ENCODE measurements at regions of chr6 and their contacts with region 1.

Region 1: DNA sequence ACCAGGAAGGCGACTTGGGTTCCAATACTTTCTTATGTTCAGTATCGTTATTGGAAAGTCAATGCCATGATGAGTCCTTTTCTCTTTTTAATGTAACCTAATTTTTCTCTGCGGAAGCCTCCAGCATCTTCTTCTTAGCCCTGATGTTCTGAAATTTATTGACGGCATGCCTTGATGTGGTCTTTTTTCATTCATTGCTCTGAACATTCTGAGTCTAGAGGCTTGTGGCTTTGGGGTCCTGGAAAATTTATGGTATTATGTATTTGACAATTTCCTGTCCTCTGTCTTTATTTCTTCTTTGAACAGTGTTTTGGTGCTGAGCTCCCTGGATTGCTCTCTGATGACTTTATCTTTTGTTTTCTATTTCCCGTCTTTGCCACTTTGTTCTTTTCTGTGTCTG is 28.7 kb upstream of the MAS1 start:
- DNase-seq: no peak
- H3K4me3 ChIP-seq: no peak overlapping the region
- H3K27ac ChIP-seq: no peak overlapping the region
- H3K4me1 ChIP-seq: no peaks in the 10 kb centered on the region
- H3K27me3 ChIP-seq: no peaks in the 10 kb centered on the region; the same call in 1 of the 2 replicates
- CTCF ChIP-seq: no peak
- EP300 ChIP-seq: no peak
- RAD21 ChIP-seq: no peak

Region 2: GRCh38 chr6:159761129-159761872 is 100.8 kb before region 1 on chr6:
- CTCF ChIA-PET with region 1: no interaction called
- POLR2A ChIA-PET with region 1: no interaction called
- DNase-seq: peak; percentile 36
- H3K4me3 ChIP-seq: peak overlapping the region; percentile 75 to 85
- H3K27ac ChIP-seq: peak overlapping the region; percentile 91 to 94
- H3K4me1 ChIP-seq: peaks cover 13 to 20% of the 10 kb centered on the region in 2 experiments
- H3K27me3 ChIP-seq: no peaks in the 10 kb centered on the region
- CTCF ChIP-seq: no peak
- EP300 ChIP-seq: no peak
- RAD21 ChIP-seq: no peak

Region 3: GRCh38 chr6:159898519-159898918 is 36.4 kb after region 1 on chr6:
- CTCF ChIA-PET with region 1: no interaction called
- POLR2A ChIA-PET with region 1: no interaction called
- DNase-seq: no peak
- H3K4me3 ChIP-seq: no peak overlapping the region
- H3K27ac ChIP-seq: no peak overlapping the region
- H3K4me1 ChIP-seq: no peaks in the 10 kb centered on the region
- H3K27me3 ChIP-seq: no peaks in the 10 kb centered on the region
- CTCF ChIP-seq: no peak
- EP300 ChIP-seq: no peak
- RAD21 ChIP-seq: no peak

Region 4: DNA sequence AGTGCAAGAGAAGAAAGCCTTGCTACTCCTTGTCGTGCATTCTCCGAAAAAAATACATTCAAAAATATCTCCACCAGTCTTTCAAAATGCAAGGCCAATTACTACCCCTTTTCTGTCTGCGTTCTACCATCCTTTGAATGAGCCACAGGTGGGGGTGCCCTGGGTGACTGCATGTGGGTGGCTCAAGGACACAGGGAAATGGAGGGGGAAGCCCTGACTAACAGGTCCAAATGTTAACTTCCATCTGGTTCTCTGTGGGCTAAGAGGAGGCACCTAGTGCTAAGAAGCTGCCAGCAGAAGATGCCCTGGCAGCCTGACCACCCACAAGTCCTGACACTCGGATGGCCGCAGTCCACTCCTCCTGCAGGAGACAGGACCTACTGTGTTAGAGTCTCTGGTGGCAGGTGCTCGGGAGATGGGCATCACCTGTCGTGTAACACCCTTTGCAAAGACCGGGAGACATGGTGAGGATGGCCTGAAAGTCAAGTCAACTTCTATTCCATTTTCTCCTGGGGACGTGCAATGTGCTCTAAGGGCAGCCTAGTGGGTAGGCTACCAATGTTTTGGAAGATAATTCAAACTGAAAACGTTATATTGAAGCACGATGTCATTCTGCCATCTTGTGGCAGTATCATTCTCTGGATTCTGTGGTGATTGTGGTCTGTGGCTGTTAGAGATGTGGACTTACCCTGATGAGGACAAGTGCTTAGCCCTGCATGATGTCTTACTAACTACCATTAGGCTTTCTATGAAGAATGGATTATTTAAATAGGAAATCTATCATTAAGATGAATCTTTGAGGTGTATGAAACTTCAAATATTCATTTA is 79.4 kb after region 1 on chr6:
- CTCF ChIA-PET with region 1: interaction called, 21 read pairs
- POLR2A ChIA-PET with region 1: no interaction called
- DNase-seq: peak; percentile 14
- H3K4me3 ChIP-seq: no peak overlapping the region
- H3K27ac ChIP-seq: no peak overlapping the region
- H3K4me1 ChIP-seq: no peaks in the 10 kb centered on the region
- H3K27me3 ChIP-seq: no peaks in the 10 kb centered on the region; the same call in 1 of the 2 replicates
- CTCF ChIP-seq: peak; percentile 53
- EP300 ChIP-seq: no peak
- RAD21 ChIP-seq: peak; percentile 75

Region 5: GRCh38 chr6:159963111-159963510 is 101.0 kb after region 1 on chr6:
- CTCF ChIA-PET with region 1: no interaction called
- POLR2A ChIA-PET with region 1: no interaction called
- DNase-seq: no peak
- H3K4me3 ChIP-seq: no peak overlapping the region
- H3K27ac ChIP-seq: no peak overlapping the region
- H3K4me1 ChIP-seq: no peaks in the 10 kb centered on the region
- H3K27me3 ChIP-seq: no peaks in the 10 kb centered on the region; the same call in 1 of the 2 replicates
- CTCF ChIP-seq: no peak
- EP300 ChIP-seq: no peak
- RAD21 ChIP-seq: no peak

Region 6: GRCh38 chr6:160005211-160005610 is 143.1 kb after region 1 on chr6:
- CTCF ChIA-PET with region 1: no interaction called
- POLR2A ChIA-PET with region 1: no interaction called
- DNase-seq: peak; percentile 45
- H3K4me3 ChIP-seq: no peak overlapping the region
- H3K27ac ChIP-seq: no peak overlapping the region
- H3K4me1 ChIP-seq: peaks cover 0 to 2% of the 10 kb centered on the region in 2 experiments; a peak in 1 of 4 replicates
- H3K27me3 ChIP-seq: no peaks in the 10 kb centered on the region; the same call in 1 of the 2 replicates
- CTCF ChIP-seq: no peak
- EP300 ChIP-seq: no peak
- RAD21 ChIP-seq: no peak

Region 7: GRCh38 chr6:160455541-160456213 is 593.6 kb after region 1 on chr6:
- CTCF ChIA-PET with region 1: interaction called, 19 read pairs
- POLR2A ChIA-PET with region 1: no interaction called
- DNase-seq: peak; percentile 64
- H3K4me3 ChIP-seq: peak overlapping the region in 1 of 2 experiments; percentile 11; a peak in 1 of 4 replicates
- H3K27ac ChIP-seq: no peak overlapping the region
- H3K4me1 ChIP-seq: peaks cover 0 to 2% of the 10 kb centered on the region in 2 experiments; a peak in 1 of 4 replicates
- H3K27me3 ChIP-seq: peaks cover 17% of the 10 kb centered on the region; the same call in 1 of the 2 replicates
- CTCF ChIP-seq: peak; percentile 98
- EP300 ChIP-seq: no peak
- RAD21 ChIP-seq: peak; percentile 88

Measured in SK-N-SH (cell line).